K562 (cell line): ENCODE measurements at regions of chr1 and their contacts with region 1.

Region 1: DNA sequence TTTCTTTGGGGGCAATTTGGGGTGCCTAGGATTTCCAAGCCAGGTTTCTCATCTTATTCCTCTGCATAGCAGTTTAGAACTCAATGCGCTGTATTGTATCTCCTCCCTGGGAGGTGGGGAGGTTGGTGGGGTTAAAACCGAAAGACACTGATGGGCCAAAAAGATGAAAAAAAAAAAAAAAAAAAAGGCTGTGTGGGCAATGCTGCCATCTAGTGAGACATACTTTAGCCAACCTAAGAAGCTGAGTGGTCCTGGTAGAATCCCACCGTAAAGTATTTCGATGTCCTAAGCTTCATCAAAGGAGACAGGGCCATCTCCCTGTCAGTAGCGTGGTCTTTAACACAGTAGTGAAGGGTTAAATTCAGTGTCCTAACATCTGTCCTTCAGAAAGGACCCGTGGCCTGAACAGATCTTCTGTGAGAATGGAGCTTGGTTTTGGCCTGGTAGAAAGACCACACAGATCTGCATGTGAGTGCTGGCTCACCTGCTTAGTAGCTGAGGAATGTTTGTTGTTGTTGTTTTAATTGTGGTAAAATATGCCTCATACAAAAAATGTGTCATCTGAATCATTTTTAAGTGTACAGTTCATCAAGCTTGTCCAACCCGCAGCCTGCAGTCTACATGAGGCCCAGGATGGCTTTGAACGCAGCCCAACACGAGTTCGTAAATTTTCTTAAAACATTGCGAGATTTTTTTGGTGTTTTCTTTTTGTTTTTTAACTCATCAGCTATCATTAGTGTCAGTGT is 226.2 kb downstream of the KIF26B start:
- DNase-seq: peak in 3 of 4 experiments; percentile 27 to 38 (median 37)
- ATAC-seq: peak; percentile 52
- H3K4me3 ChIP-seq: no peak overlapping the region
- H3K27ac ChIP-seq: no peak overlapping the region
- H3K4me1 ChIP-seq: no peaks in the 10 kb centered on the region
- H3K27me3 ChIP-seq: peaks cover 38 to 49% of the 10 kb centered on the region in 2 experiments
- CTCF ChIP-seq: peak; percentile 48 to 65 (median 52); a peak in 5 of 6 replicates
- EP300 ChIP-seq: no peak
- POLR2A ChIP-seq: no peak
- RAD21 ChIP-seq: peak; percentile 36 to 55

Region 2: DNA sequence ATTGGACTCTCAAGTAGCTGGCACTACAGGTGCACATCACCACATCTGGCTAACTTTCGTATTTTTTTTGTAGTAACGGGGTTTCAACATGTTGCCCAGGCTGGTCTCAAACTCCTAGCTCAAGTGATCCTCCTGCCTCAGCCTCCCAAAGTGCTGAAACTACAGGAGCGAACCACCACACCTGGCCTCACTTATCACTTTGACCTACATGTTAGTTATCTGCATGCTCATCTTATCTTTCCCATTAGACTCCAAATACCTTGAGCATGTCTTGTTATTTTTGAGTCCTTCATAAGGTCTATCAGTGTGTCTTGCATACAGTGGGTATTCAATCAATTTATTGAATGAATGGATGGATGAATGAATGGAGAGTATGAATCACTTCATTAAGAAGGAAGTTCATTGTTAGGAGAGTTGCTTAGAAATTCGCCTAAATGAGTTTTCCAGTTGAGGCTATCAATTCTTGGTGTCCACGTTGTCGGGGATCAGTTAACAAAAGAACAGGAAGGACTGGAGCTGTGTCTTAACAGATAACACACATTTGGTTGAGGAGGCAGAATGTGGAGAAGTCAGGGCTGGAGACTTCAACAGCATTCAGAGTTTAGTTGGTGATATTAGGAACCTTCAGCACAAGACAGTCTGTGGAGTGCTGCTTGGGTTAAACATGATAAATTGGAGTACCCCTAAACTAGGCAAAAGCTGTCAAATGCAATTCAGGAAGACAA is 1296.4 kb before region 1 on chr1:
- CTCF ChIA-PET with region 1: no interaction called
- POLR2A ChIA-PET with region 1: no interaction called
- in situ Hi-C with region 1: no loop called
- intact Hi-C with region 1: no loop called
- DNase-seq: peak in 1 of 4 experiments; percentile 17
- ATAC-seq: peak; percentile 57; the same call in 2 of the 3 replicates
- H3K4me3 ChIP-seq: no peak overlapping the region
- H3K27ac ChIP-seq: no peak overlapping the region
- H3K4me1 ChIP-seq: peaks cover 0 to 2% of the 10 kb centered on the region in 2 experiments; a peak in 2 of 5 replicates
- H3K27me3 ChIP-seq: peaks cover 26 to 63% of the 10 kb centered on the region in 2 experiments
- CTCF ChIP-seq: no peak
- EP300 ChIP-seq: no peak
- POLR2A ChIP-seq: no peak
- RAD21 ChIP-seq: no peak

Region 3: GRCh38 chr1:245079021-245079609 is 301.8 kb before region 1 on chr1:
- CTCF ChIA-PET with region 1: interaction called, 3 read pairs
- POLR2A ChIA-PET with region 1: no interaction called
- in situ Hi-C with region 1: no loop called
- intact Hi-C with region 1: loop called (anchors 10 kb)
- DNase-seq: peak in 1 of 4 experiments; percentile 47
- ATAC-seq: peak; percentile 75
- H3K4me3 ChIP-seq: no peak overlapping the region
- H3K27ac ChIP-seq: no peak overlapping the region
- H3K4me1 ChIP-seq: no peaks in the 10 kb centered on the region
- H3K27me3 ChIP-seq: no peaks in the 10 kb centered on the region; a peak in 1 of 5 replicates
- CTCF ChIP-seq: peak; percentile 52 to 90 (median 55); a peak in 5 of 6 replicates
- EP300 ChIP-seq: no peak
- POLR2A ChIP-seq: no peak
- RAD21 ChIP-seq: peak; percentile 63 to 82